ENCODE measurements at regions of chr16 and their contacts with region 1.

Region 1: GRCh38 chr16:69726296-69727060 is at the start of gene NQO1:
- DNase-seq: peak; percentile 98 to 99
- H3K4me3 ChIP-seq: peak within 1 kb of the TSS; percentile 38
- H3K4me3 Mint-ChIP-seq: peak within 1 kb of the TSS; percentile 95
- H3K27ac Mint-ChIP-seq: peak within 1 kb of the TSS; percentile 98
- H3K4me1 ChIP-seq: peaks cover 32% of the 10 kb centered on the region
- H3K4me1 Mint-ChIP-seq: peaks cover 30% of the 10 kb centered on the region
- H3K27me3 ChIP-seq: no peaks in the 10 kb centered on the region
- H3K27me3 Mint-ChIP-seq: no peaks in the 10 kb centered on the region
- CTCF ChIP-seq: no peak
- total RNA-seq, gene NQO1: 96.2 and 119 TPM in 2 replicates

Region 2: GRCh38 chr16:69709456-69710084 is 16.9 kb before region 1 on chr16:
- CTCF ChIA-PET with region 1: no interaction called
- POLR2A ChIA-PET with region 1: interaction called, 6 read pairs
- intact Hi-C with region 1: loop called (anchors 2 kb)
- DNase-seq: peak in 1 of 2 experiments; percentile 62
- H3K4me3 ChIP-seq: no peak overlapping the region
- H3K4me3 Mint-ChIP-seq: no peak overlapping the region
- H3K27ac Mint-ChIP-seq: no peak overlapping the region
- H3K4me1 ChIP-seq: peaks cover 7% of the 10 kb centered on the region
- H3K4me1 Mint-ChIP-seq: peaks cover 13% of the 10 kb centered on the region
- H3K27me3 ChIP-seq: no peaks in the 10 kb centered on the region
- H3K27me3 Mint-ChIP-seq: no peaks in the 10 kb centered on the region
- CTCF ChIP-seq: peak; percentile 67 to 82

Region 3: GRCh38 chr16:69741919-69742904 is 15.7 kb after region 1 on chr16:
- CTCF ChIA-PET with region 1: interaction called, 3 read pairs
- POLR2A ChIA-PET with region 1: interaction called, 11 read pairs
- intact Hi-C with region 1: no loop called
- DNase-seq: no peak
- H3K4me3 ChIP-seq: no peak overlapping the region
- H3K4me3 Mint-ChIP-seq: no peak overlapping the region
- H3K27ac Mint-ChIP-seq: no peak overlapping the region
- H3K4me1 ChIP-seq: no peaks in the 10 kb centered on the region
- H3K4me1 Mint-ChIP-seq: no peaks in the 10 kb centered on the region
- H3K27me3 ChIP-seq: no peaks in the 10 kb centered on the region
- H3K27me3 Mint-ChIP-seq: no peaks in the 10 kb centered on the region
- CTCF ChIP-seq: no peak

Region 4: GRCh38 chr16:69754469-69755310 is 28.2 kb after region 1 on chr16 and contains the start of gene NOB1:
- CTCF ChIA-PET with region 1: interaction called, 13 read pairs
- POLR2A ChIA-PET with region 1: interaction called, 31 read pairs
- intact Hi-C with region 1: loop called (anchors 1 kb)
- DNase-seq: peak; percentile 98 to 99
- H3K4me3 ChIP-seq: peak within 1 kb of the TSS; percentile 74
- H3K4me3 Mint-ChIP-seq: peak within 1 kb of the TSS; percentile 96
- H3K27ac Mint-ChIP-seq: peak within 1 kb of the TSS; percentile 99
- H3K4me1 ChIP-seq: peaks cover 9% of the 10 kb centered on the region
- H3K4me1 Mint-ChIP-seq: peaks cover 9% of the 10 kb centered on the region
- H3K27me3 ChIP-seq: no peaks in the 10 kb centered on the region
- H3K27me3 Mint-ChIP-seq: peaks cover 2% of the 10 kb centered on the region
- CTCF ChIP-seq: peak; percentile 96 to 99
- total RNA-seq, gene NOB1: 115 and 120 TPM in 2 replicates

Measured in Caco-2 (cell line).